Activated B cell treated with CpG ODN at 0.5 μM for 24 hours (primary cell): ENCODE measurements at regions of chr1 and their contacts with region 1.

Region 1: DNA sequence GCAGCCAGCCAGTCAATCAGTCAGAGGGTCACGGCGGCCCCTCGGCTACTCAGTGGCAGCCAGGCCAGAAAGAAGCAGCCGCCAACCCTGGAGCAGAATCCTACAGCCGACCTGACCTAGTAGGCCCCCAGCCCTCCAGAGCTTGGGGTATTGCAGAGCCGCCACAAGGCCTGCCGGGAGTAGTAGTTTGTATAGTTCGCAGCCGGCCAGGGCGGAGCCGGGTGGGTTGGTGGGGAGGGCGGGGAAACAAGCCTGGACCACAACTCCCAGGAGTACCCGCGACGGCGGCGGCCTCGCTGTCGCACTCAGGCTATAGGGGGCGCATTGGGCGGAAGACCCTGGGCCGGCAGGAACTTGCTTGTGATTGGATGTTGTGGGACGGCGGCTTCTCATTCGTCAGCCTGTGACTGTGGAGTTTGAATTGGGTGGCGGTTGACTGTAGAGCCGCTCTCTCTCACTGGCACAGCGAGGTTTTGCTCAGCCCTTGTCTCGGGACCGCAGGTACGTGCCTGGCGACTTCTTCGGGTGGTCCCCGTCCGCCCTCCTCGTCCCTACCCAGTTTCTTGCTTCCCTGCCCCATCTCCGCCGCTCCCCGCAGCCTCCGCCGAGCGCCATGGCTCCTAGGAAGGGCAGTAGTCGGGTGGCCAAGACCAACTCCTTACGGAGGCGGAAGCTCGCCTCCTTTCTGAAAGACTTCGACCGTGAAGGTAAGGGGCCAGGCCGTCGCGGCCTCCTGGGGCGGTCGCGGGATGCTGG is at the start of gene CDCA8:
- DNase-seq: peak; percentile 95
- ATAC-seq: peak; percentile 92
- H3K4me3 Mint-ChIP-seq: peak within 1 kb of the TSS; percentile 93
- H3K27ac Mint-ChIP-seq: peak within 1 kb of the TSS; percentile 91
- H3K4me1 Mint-ChIP-seq: peaks cover 47% of the 10 kb centered on the region
- H3K27me3 Mint-ChIP-seq: no peaks in the 10 kb centered on the region
- CTCF ChIP-seq: no peak
- total RNA-seq, gene CDCA8: 1.9 and 2.9 TPM in 2 replicates

Region 2: DNA sequence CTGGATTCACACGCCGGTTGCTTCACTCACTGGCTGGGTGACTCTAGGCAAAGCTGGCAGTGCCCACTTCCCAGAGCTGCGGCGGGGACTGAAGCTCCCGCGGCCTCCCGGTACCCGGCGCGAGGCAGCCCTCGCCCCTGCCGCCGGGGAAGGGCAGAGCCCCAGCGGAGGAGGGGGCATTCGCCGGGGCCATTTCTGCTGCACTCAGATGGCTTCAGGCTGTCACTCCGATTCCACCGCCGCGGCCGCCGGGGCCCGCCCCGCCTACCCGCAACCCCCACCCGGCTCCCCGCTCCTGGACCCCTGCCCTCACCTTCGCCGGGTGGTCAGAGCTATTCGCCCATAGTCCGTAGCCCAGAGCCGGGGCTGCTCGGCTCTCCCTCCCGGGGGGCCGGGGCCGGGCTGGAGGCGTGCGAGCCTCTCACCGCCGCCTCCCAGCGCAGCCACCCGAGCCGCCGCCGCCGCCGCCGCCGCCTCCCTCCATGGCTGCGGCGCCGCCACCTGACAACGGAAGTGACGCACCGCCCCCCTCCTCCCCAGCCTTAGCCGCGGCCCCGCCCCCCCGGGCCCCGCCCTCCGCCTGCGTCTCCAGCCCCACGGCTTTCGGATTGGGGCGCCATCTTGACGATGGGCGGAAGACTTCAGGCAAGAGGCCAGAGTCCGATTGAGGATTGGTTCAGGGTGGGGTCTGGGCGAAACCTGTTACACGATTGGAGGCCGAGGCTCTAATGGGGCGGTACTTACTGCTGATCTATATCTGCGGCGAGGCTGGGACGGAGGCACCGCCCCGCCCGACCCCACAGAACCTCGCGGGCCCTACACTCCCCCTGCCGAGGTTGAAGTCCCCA is 1306.6 kb before region 1 on chr1 and contains the start of gene STK40:
- CTCF ChIA-PET with region 1: no interaction called
- POLR2A ChIA-PET with region 1: no interaction called
- intact Hi-C with region 1: loop called (anchors 1 kb)
- DNase-seq: peak; percentile 88
- ATAC-seq: peak; percentile 83
- H3K4me3 Mint-ChIP-seq: peak within 1 kb of the TSS; percentile 91
- H3K27ac Mint-ChIP-seq: peak within 1 kb of the TSS; percentile 100
- H3K4me1 Mint-ChIP-seq: peaks cover 88% of the 10 kb centered on the region
- H3K27me3 Mint-ChIP-seq: no peaks in the 10 kb centered on the region
- CTCF ChIP-seq: no peak
- total RNA-seq, gene STK40: 62.7 and 63.7 TPM in 2 replicates

Region 3: DNA sequence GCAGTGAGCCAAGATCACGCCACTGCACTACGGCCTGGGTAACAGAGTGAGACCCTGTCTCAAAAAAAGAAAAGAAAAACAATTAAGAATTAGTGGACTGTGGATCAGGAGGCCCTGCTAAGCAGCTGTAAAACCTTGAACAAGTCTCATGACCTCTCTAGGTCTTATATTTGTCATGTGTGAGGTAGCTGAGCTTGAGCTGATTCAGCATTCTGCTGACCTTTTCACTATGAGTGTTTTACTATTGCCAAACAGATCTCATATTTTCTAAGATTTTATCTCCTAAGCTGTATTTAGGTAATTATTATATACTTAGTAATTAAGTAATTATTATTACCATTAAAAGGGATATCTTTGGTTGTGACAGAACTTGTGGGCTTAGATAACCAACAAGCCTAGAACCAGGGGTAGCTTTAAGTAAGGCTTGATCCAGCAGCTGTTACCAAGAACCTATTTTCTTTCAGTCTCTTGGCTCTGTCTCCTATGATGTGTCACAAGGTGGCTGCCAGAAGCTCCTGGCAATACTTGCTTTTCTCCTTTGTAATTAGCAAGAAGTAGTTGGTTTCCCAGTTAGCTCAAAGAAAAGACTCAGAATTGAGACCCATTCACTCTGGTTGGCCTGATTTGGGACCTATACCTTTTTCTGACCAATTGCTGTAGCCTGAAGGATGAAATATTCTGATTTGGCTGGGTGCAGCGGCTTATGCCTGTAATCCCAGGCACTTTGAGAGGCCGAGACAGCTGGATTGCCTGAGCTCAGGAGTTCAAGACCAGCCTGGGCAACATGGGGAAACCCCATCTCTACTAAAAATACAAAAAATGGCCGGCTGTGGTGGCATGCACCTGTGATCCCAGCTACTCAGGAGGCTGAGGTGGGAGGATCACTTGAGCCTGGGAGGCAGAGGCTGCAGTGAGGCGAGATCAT is 226.4 kb before region 1 on chr1:
- CTCF ChIA-PET with region 1: no interaction called
- POLR2A ChIA-PET with region 1: no interaction called
- intact Hi-C with region 1: no loop called
- DNase-seq: no peak
- ATAC-seq: no peak
- H3K4me3 Mint-ChIP-seq: no peak overlapping the region
- H3K27ac Mint-ChIP-seq: no peak overlapping the region
- H3K4me1 Mint-ChIP-seq: no peaks in the 10 kb centered on the region
- H3K27me3 Mint-ChIP-seq: peaks cover 2% of the 10 kb centered on the region
- CTCF ChIP-seq: no peak

Region 4: DNA sequence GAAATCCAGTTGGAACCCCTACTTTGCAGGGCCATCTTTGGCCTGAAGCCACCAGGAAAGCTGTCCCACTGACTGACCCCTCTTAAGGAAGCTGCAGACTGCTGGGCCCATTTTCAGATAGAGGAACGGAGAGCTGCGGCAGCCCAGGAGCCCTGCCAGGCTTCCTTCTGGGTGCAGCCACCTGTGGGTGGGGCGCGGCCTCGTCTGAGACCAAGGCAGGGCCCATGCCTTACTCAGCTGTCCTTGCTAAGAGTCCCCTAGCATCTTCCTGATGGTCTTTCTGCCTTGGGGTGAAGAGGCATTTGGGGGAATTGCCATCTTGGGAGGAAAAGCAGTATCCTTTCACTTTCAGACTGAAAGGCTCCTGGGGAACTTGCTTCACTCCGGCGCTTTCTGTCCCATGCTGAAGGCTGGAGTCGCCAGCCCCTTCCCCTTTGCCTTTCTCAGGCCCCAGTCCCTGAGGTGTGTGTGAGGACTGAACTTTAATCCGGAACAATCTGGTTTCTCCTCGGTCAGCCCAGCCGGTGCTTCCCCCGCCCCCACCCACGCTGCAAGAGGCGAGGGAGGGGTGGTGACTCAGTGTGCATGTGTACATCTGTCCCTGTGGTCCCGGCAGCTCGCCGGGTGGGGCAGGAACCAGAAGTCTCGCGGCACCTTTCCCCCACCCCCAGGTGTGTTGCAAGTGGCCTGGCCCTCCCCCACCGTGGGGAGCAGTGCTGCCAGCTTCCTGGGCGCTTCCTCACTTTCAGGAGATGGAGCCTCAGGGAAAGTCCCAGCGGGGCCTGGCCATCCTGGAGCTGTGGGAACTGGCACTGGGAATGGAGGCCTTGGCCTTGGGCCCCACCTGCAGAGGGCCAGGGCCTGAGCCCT is 212.8 kb before region 1 on chr1:
- CTCF ChIA-PET with region 1: no interaction called
- POLR2A ChIA-PET with region 1: interaction called, 29 read pairs
- intact Hi-C with region 1: loop called (anchors 1 kb)
- DNase-seq: peak; percentile 64
- ATAC-seq: peak; percentile 54
- H3K4me3 Mint-ChIP-seq: peak overlapping the region; percentile 99
- H3K27ac Mint-ChIP-seq: peak overlapping the region; percentile 92
- H3K4me1 Mint-ChIP-seq: peaks cover 61% of the 10 kb centered on the region
- H3K27me3 Mint-ChIP-seq: no peaks in the 10 kb centered on the region
- CTCF ChIP-seq: no peak

Region 5: DNA sequence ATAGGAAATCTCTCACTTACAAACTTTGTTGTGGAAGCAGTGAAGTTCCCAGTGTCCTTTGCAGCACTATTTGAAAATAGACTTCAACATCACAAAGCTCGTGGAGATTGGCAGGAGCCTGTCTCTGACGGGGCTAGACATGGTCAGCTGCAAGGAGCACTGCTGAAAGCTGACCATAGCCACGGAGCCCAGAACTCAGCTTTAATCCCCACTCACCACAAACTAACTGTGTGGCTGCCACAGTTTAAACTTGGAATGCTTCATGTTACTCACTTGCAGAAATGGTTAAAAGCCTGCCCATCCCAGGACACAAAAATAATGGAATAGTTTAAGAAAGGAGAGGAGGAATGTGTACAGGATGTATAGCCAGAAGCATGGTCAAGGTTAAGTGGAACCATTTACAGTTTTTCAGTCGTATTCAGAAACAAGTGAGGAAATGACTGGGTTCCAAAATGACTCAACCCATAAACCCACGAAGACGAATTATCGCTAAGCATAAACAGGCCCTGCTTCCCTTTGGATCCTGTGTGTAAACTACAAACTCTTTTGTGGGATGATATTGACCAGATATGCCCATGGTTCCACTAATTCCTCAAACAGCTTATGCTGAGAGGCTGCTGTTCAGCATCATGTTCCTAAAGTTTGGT is 117.3 kb before region 1 on chr1:
- CTCF ChIA-PET with region 1: no interaction called
- POLR2A ChIA-PET with region 1: no interaction called
- intact Hi-C with region 1: no loop called
- DNase-seq: no peak
- ATAC-seq: no peak
- H3K4me3 Mint-ChIP-seq: no peak overlapping the region
- H3K27ac Mint-ChIP-seq: no peak overlapping the region
- H3K4me1 Mint-ChIP-seq: no peaks in the 10 kb centered on the region
- H3K27me3 Mint-ChIP-seq: no peaks in the 10 kb centered on the region
- CTCF ChIP-seq: no peak

Region 6: DNA sequence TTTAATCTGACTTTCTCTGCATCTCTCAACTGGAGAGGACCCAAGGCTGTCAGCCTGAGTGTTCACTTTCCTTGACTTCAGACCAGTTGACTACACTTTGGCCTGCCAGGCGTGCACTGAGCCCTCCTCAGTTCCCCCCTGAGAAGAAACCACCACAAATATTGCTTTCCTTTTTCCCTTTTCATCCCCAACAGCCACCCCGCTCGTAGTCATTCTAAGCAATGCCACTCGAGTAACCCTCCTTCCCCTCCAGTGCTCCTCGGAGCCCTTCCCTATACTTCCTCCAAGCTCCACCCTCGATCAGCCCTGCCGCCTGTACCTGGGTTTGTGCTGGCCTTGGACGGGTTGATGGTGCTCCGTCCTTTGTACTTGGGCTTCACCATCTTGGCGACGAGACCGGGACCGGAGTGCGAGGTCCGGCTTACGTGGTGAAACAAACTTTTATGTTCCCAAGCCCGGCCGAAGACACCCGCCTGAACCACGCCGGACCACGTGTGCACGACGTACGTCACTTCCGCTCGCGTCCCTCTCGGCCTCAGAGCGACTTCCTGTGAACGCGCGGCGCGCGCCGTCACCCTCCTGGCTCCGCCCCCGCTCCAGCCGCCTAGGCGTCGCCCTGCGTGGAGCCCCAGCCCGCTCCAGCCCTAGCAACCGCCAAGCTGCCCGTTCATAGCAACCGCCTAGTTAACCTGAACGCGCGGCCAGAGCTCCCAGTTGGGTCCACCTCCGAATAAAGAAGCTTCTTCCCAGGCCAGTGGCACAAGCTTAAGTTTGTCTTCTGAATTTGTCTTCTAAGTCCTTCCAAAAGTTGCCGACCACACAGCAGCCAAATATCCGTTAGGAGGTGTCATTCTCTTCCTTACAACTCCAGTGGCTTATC is 96.6 kb before region 1 on chr1 and contains the start of gene GNL2:
- CTCF ChIA-PET with region 1: no interaction called
- POLR2A ChIA-PET with region 1: interaction called, 13 read pairs
- intact Hi-C with region 1: loop called (anchors 1 kb)
- DNase-seq: peak; percentile 98
- ATAC-seq: peak; percentile 98
- H3K4me3 Mint-ChIP-seq: peak within 1 kb of the TSS; percentile 99
- H3K27ac Mint-ChIP-seq: peak within 1 kb of the TSS; percentile 96
- H3K4me1 Mint-ChIP-seq: peaks cover 30% of the 10 kb centered on the region
- H3K27me3 Mint-ChIP-seq: peaks cover 3% of the 10 kb centered on the region
- CTCF ChIP-seq: no peak
- total RNA-seq, gene GNL2: 68.0 and 71.4 TPM in 2 replicates

Region 7: DNA sequence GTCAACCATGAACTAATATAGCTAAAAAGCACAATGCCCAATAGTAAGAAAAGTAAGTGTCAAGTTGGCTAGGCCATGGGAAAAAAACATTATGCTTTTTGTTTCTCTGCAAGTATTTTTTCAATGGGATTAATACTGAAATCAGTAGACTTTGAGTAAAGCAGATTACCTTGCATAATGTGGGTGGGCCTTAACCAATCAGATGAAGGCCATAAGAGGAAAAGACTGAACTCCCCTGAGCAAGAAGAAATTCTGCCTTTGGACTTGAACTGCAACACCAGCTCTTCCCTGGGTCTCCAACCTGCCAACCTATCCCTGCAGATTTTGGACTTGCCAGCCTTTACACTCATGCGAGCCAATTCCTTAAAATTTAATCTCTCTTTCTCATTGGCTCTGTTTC is 51.2 kb before region 1 on chr1:
- CTCF ChIA-PET with region 1: no interaction called
- POLR2A ChIA-PET with region 1: no interaction called
- intact Hi-C with region 1: no loop called
- DNase-seq: no peak
- ATAC-seq: no peak
- H3K4me3 Mint-ChIP-seq: no peak overlapping the region
- H3K27ac Mint-ChIP-seq: no peak overlapping the region
- H3K4me1 Mint-ChIP-seq: no peaks in the 10 kb centered on the region
- H3K27me3 Mint-ChIP-seq: peaks cover 17% of the 10 kb centered on the region
- CTCF ChIP-seq: no peak

Region 8: DNA sequence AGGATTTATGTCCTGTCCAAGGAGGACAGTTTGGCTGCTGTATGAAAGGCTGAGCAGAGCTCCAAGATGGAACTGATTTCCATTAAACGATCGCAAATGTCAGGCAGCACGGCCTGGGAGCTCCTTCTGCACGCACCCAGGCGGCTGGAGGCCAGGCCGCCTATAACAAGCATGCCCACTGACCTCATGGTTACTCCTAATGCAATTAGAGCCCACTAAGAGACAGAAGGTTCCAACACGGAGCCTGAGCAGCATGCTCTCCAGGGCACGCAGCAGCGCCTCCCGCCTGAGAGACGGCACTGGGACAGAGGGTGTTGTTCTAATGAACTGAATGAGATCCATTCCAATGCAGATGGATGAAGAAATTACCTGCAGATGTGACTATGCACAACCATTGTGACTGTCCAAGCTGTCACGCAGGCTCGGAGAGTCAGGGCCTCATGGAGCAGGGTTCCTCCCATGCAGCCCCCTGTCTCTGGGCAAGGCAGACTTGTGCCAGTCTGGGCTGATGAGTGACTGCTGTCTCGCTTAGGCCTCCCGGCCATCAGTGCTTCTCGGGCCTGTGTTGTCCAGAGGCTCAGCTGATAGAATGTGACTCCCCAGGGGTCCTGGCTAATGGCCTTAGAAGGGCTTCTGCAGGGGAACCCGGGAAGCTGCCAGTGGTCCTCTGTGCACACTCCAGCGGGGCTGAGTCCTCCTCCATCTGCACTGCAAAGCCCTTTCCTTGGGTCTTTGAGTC is 25.1 kb before region 1 on chr1:
- CTCF ChIA-PET with region 1: no interaction called
- POLR2A ChIA-PET with region 1: no interaction called
- intact Hi-C with region 1: no loop called
- DNase-seq: no peak
- ATAC-seq: no peak
- H3K4me3 Mint-ChIP-seq: no peak overlapping the region
- H3K27ac Mint-ChIP-seq: no peak overlapping the region
- H3K4me1 Mint-ChIP-seq: no peaks in the 10 kb centered on the region
- H3K27me3 Mint-ChIP-seq: peaks cover 3% of the 10 kb centered on the region
- CTCF ChIP-seq: no peak

Region 9: DNA sequence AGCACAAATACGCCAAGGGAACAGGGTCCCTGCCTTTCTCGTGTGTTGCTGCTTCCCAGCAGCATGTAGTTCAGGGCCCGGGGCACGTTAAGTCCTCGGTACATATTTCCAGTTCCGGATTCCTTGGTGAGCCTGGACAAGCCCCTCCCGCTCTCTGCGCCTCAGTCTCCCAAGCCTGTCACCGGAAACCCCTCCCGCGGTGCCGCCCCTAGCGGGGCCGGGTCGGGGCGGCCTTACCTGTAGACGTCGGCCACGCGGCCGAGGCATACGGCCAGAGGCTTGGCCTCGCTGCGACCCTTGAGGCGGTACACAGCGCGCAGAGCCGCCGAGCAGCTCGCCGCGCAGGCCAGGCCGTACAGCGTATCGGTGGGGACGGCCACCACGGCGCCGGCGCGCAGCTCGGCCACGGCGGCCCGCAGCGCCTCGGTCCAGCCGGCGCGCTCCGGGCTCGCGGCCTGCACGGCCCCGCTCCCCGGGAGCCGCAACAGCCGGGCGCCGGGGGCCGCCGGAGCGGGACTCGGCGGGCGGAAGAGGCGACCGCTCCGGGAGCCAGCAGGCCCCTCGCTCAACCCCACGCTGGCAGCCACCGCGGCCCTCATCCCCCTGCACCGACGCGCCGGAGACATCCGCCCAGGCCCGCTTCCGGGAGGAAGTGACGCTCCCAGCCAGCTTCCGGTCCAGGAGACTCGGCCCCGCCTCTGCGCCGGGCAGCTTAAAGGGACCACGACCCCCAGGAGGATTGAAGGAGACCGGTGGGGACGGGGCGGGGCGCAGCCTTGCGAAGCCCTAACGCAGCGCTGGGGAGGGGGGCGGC is 115.5 kb after region 1 on chr1 and contains the starts of genes C1orf122 and YRDC:
- CTCF ChIA-PET with region 1: no interaction called
- POLR2A ChIA-PET with region 1: interaction called, 12 read pairs
- intact Hi-C with region 1: loop called (anchors 1 kb)
- DNase-seq: peak; percentile 93
- ATAC-seq: peak; percentile 89
- H3K4me3 Mint-ChIP-seq: peak within 1 kb of the TSS; percentile 95
- H3K27ac Mint-ChIP-seq: peak within 1 kb of the TSS; percentile 92
- H3K4me1 Mint-ChIP-seq: peaks cover 45% of the 10 kb centered on the region
- H3K27me3 Mint-ChIP-seq: no peaks in the 10 kb centered on the region
- CTCF ChIP-seq: no peak
- total RNA-seq, gene C1orf122: 18.8 and 19.9 TPM in 2 replicates
- total RNA-seq, gene YRDC: 20.6 and 24.2 TPM in 2 replicates

Region 10: GRCh38 chr1:37946703-37947360 is 254.6 kb after region 1 on chr1 and contains the start of gene INPP5B:
- CTCF ChIA-PET with region 1: no interaction called
- POLR2A ChIA-PET with region 1: no interaction called
- intact Hi-C with region 1: loop called (anchors 5 kb)
- DNase-seq: peak; percentile 74
- ATAC-seq: peak; percentile 100
- H3K4me3 Mint-ChIP-seq: peak within 1 kb of the TSS; percentile 100
- H3K27ac Mint-ChIP-seq: peak within 1 kb of the TSS; percentile 97
- H3K4me1 Mint-ChIP-seq: peaks cover 23% of the 10 kb centered on the region
- H3K27me3 Mint-ChIP-seq: no peaks in the 10 kb centered on the region
- CTCF ChIP-seq: no peak
- total RNA-seq, gene INPP5B: 63.4 and 70.3 TPM in 2 replicates

Region 11: DNA sequence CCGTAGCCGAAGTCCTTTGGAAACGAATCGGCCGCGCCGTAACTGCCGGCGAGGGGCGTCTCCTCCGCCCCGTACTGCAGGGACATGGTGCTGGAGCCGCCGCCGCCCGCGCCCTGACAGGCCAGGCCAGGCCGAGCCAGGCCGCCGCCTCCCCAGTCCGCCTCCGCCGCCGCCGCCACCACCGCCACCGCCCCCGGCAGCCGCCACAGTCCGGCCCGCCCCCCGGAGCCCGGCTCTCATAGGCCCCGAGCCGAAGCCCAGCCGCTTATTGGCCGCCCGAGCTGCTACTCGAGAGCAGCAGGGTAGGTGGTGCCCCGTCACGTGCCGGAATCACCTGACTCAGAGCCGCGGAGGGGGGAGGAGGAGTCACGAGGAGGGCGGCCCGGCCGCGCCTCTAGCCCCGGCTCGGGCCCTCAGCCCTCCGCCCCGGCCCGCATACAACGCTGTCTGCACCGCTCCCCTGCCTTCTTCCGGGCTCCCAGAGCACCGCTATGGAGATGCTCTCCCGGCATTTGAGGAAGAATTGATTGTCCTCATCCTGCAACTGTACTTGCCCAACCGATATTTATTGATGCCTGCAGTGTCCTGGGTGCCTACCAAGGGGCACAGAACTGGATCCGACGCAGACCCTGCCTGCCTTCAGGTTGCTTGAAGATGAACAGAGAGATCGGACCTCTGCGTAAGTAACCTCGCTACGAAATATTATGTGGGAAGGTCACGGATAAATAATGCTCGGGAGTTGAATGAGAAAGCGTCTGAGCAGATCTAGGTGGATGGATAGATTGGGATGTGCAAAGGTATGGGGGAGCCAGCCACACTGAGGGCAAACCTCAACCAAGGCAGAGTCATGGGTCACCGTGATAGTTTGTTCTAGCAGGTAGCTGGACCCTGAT is 1167.6 kb after region 1 on chr1 and contains the start of gene RRAGC:
- CTCF ChIA-PET with region 1: no interaction called
- POLR2A ChIA-PET with region 1: no interaction called
- intact Hi-C with region 1: loop called (anchors 5 kb)
- DNase-seq: peak; percentile 96
- ATAC-seq: peak; percentile 91
- H3K4me3 Mint-ChIP-seq: peak within 1 kb of the TSS; percentile 95
- H3K27ac Mint-ChIP-seq: peak within 1 kb of the TSS; percentile 93
- H3K4me1 Mint-ChIP-seq: peaks cover 53% of the 10 kb centered on the region
- H3K27me3 Mint-ChIP-seq: no peaks in the 10 kb centered on the region
- CTCF ChIP-seq: no peak
- total RNA-seq, gene RRAGC: 33.7 and 35.9 TPM in 2 replicates